ENCODE measurements at regions of chr2 and their contacts with region 1.

Region 1: DNA sequence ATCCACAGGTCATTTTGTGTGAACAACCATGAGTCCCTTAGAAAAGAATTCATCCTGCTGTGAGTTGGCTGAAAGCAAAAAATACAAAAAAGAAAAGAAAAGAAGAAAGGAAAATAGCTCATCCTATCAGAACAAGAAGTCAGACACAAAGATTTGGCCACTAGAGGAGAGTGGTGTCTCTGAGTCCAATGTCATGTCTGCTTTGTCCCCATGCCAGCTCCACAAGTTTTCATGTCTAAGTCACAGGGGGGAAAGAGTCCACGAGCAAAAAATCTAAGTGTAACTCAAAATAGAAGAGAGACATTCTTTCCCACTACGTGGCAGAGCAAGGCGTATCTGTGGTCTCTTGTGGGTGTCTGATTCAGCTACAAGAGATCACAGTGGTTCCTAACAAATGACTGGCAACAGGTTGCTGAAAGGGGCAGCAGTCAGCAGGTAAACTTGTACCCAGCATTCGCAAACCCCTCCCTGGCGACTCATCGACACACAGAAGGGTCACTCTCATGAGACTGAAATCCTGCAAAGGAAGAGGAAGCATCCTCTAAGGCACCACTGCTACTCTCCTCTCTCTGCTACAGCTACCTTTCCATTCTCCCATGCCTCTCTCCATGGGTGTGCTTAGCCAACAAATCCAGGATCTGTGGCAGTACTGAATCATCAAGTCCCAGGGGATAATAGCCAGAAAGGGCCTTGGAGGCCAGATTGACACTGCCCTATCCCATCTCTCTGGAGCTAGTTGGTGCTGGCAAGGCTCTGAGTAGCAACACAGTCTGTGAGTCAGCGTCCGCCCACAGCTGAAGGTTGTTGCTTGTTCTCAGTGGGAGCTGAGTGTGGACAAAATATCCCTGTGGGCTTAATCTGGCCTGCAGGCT is 123.0 kb upstream of the SLC39A10 start:
- DNase-seq: peak; percentile 86
- ATAC-seq: peak; percentile 75
- H3K4me3 Mint-ChIP-seq: peak overlapping the region; percentile 78
- H3K27ac Mint-ChIP-seq: peak overlapping the region; percentile 100
- H3K4me1 Mint-ChIP-seq: peaks cover 82% of the 10 kb centered on the region
- H3K27me3 Mint-ChIP-seq: no peaks in the 10 kb centered on the region

Region 2: GRCh38 chr2:195252018-195252417 is 282.0 kb before region 1 on chr2:
- CTCF ChIA-PET with region 1: no interaction called
- POLR2A ChIA-PET with region 1: no interaction called
- intact Hi-C with region 1: no loop called
- DNase-seq: no peak
- ATAC-seq: no peak
- H3K4me3 Mint-ChIP-seq: no peak overlapping the region
- H3K27ac Mint-ChIP-seq: no peak overlapping the region
- H3K4me1 Mint-ChIP-seq: no peaks in the 10 kb centered on the region
- H3K27me3 Mint-ChIP-seq: peaks cover under 1% of the 10 kb centered on the region

Region 3: DNA sequence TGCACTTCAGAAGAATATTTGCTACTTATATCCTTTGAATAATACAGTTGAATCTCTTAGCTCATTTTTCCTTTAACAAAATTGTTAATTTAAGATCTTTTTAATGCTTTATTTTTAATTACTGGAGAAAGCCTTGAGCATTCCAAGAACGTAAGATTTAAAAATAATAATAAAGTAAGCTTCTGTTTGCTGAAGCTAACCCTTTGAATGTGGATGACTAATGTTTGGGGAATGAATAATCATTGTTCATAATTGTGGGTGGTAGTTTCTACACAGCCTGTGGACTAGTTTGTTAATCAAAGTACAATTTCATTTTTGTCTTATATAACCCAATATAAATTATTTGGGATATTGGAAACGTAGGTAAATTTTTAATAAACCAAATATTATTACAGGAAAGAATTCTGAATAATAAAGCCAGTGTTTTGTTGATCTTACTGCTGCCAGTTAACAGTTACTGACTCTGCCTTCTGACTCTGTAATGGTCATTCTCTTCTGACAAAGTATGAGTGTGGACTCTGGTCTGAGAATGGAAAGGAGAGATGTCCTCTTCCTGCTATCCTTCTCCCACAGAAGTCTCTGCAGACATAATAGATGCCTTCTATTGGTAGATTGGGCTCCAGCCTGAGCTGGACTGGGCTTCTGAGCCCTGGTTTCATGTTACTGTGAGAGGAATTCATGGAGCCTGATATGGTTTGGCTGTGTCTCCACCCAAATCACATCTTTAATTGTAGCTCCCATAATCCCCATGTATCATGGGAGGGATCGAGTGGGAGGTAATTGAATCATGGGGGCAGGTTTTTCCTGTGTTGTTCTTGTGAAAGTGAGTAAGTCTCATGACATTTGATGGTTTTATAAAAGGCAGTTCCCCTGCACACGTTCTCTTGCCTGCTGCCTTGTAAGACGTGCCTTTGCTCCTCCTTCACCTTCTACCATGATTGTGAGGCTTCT is 169.7 kb before region 1 on chr2:
- CTCF ChIA-PET with region 1: interaction called, 3 read pairs
- POLR2A ChIA-PET with region 1: no interaction called
- intact Hi-C with region 1: loop called in 1 of 2 experiments (anchors 2 kb)
- DNase-seq: peak; percentile 17
- ATAC-seq: peak; percentile 70
- H3K4me3 Mint-ChIP-seq: no peak overlapping the region
- H3K27ac Mint-ChIP-seq: peak overlapping the region; percentile 68
- H3K4me1 Mint-ChIP-seq: peaks cover 31% of the 10 kb centered on the region
- H3K27me3 Mint-ChIP-seq: no peaks in the 10 kb centered on the region

Region 4: DNA sequence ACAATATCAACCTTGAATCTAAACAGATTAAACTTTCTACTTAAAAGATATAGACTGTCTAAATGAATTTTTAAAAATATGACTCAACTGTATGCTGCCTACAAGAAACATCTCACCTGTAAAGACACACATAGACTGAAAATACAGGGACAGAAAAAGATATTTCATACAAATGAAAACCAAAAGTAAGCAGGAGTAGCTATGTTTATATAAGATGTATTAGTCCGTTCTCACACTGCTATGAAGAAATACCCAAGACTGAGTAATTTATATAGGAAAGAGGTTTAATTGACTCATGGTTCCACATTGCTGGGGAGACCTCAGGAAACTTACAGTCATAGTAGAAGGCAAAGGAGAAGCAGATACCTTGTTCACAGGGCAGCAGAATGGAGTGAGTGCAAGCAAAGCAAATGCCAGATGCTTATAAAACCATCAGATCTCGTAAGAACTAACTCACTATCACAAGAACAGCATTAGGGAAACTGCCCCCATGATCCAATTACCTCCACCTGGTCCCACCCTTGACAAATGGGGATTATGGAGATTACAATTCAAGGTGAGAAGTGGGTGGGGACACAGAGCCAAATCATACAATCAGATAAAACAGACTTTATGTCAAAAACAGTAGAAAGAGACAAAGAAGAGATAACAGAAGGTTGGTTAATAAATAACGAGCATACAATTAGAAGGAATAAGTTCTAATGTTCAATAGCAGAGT is 91.4 kb before region 1 on chr2:
- CTCF ChIA-PET with region 1: no interaction called
- POLR2A ChIA-PET with region 1: no interaction called
- intact Hi-C with region 1: loop called in 1 of 2 experiments (anchors 1 kb)
- DNase-seq: no peak
- ATAC-seq: peak; percentile 88
- H3K4me3 Mint-ChIP-seq: no peak overlapping the region
- H3K27ac Mint-ChIP-seq: peak overlapping the region; percentile 32
- H3K4me1 Mint-ChIP-seq: peaks cover 10% of the 10 kb centered on the region
- H3K27me3 Mint-ChIP-seq: no peaks in the 10 kb centered on the region

Region 5: DNA sequence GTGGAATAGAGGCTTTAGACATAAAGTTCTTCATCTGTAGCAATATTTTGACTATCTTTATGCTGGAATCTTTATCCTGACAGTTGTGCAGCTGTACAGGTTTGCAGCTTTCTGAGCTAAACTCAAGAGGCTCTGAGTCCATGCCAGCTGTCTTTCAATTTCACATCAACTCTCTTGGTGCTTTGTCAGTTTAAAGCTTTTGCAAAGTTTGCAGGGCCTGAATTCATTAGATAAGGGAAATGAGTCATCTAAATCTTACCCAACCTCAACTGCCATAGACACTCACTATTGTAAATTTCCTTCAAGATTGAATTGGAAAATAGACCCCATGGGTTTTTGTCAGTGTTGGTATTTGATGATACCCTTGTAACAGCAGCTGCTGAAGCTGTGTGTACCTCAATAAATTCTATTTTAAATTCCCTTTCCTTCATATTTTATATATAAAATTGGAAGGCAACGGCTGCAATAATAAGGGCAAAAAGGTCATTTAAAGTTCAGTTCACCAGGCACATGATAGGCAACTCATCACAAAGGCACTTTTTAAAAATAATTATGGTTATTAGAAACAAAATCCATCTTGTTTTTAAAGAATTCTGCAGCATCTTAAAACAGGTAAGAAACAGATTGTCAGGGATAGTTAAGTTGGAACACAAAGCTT is 46.9 kb before region 1 on chr2:
- CTCF ChIA-PET with region 1: no interaction called
- POLR2A ChIA-PET with region 1: no interaction called
- intact Hi-C with region 1: loop called (anchors 2 kb)
- DNase-seq: peak; percentile 11
- ATAC-seq: peak; percentile 82
- H3K4me3 Mint-ChIP-seq: no peak overlapping the region
- H3K27ac Mint-ChIP-seq: no peak overlapping the region
- H3K4me1 Mint-ChIP-seq: peaks cover 20% of the 10 kb centered on the region
- H3K27me3 Mint-ChIP-seq: no peaks in the 10 kb centered on the region

Region 6: DNA sequence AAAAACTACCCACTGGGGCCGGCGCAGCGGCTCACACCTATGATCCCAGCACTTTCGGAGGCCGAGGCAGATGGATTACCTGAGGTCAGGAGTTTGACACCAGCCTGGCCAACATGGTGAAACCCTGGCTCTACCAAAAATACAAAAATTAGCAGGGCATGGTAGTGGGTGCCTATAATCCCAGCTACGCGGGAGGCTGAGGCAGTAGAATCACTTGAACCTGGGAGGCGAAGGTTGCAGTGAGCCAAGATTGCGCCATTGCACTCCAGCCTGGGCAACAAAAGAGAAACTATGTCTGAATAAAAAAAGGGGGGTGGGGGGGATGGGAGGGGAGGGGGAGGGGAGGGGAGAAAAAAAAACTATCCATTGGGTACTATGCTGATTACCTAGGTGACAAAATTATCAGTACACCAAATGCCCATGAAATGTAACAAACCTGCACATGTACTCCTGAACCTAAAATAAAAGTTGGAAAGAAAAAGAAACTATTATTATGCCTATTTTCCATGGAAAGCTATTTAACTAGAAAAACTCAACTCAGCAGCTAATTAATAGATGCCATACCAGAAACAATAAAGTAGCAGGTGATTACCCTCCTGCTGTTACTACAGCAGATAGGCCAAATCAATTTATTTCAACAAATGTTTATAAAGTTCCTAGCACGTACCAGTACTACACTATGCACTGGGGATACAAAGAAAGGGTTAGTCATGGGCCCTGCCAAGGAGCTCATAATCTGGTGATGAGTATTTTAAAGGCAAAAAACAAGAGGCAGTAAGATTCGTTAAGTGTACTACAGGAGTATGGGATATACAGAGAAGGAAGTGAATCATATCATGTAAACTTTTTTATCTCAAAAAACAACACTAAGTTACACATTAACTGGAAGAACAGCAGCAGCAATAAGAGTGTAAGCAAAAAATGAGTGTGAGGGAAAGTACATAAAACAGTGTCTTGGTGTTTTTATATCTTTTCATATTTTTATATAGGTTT is 10.2 kb after region 1 on chr2:
- CTCF ChIA-PET with region 1: interaction called, 33 read pairs
- POLR2A ChIA-PET with region 1: interaction called, 33 read pairs
- intact Hi-C with region 1: loop called (anchors 1 kb)
- DNase-seq: peak; percentile 63
- ATAC-seq: peak; percentile 99
- H3K4me3 Mint-ChIP-seq: peak overlapping the region; percentile 15
- H3K27ac Mint-ChIP-seq: peak overlapping the region; percentile 96
- H3K4me1 Mint-ChIP-seq: peaks cover 66% of the 10 kb centered on the region
- H3K27me3 Mint-ChIP-seq: no peaks in the 10 kb centered on the region

Measured in activated CD4-positive, alpha-beta T cell treated with anti-CD3 and anti-CD28 coated beads for 36 hours (primary cell).